ENCODE measurements at regions of chr16 and their contacts with region 1.

Region 1: DNA sequence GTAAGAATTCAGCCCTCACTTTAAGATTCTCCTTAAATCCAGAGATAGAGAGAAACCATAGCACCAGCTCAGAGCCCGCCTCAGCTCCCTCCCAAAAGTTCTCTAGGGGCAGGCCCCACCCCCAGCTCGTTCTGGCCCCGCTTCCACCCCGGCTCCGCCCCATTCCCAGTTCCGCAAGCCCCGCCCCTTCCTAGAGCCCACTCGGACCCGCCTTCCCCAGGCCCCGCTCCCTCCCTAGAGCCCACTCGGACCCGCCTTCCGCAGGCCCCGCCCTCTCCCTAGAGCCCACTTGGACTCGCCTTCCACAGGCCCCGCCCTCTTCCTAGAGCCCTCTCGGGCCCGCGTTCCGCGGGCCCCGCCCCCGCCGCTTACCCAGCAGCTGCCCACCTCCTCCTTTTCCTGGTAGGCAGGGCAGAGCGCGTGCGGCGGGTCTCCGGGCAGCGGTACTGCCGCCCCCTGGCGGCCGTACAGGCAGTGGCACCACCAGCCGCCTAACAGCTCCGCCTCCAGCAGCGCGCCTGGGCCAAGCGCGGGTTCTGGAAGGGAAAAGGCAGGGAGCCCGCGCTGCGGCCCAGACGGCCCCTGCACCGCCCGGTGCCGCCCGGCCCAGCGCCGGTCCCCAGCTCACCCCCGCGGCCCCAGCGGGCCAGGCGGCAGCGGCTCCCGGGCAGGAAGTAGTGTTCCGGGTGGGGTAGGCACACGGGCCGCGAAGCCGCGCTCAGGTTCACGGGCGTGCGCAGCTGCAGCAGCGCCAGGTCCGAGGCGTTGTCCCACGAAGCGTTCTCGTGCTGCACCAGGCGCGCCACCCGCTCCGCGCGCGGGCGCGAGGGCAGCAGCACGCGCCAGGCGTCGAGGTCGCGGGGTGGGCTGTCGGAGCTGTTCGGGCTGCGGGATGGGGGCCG is 6.8 kb upstream of the PRSS8 start:
- DNase-seq: peak; percentile 89
- ATAC-seq: peak; percentile 95
- H3K4me3 ChIP-seq: peak overlapping the region; percentile 63; the same call in 1 of the 2 replicates
- H3K27ac ChIP-seq: peak overlapping the region; percentile 55
- H3K4me1 ChIP-seq: peaks cover 9% of the 10 kb centered on the region
- H3K27me3 ChIP-seq: no peaks in the 10 kb centered on the region
- CTCF ChIP-seq: peak; percentile 87 to 97 (median 95)
- EP300 ChIP-seq: no peak
- POLR2A ChIP-seq: peak; percentile 36; the same call in 1 of the 2 replicates
- RAD21 ChIP-seq: peak; percentile 63

Region 2: DNA sequence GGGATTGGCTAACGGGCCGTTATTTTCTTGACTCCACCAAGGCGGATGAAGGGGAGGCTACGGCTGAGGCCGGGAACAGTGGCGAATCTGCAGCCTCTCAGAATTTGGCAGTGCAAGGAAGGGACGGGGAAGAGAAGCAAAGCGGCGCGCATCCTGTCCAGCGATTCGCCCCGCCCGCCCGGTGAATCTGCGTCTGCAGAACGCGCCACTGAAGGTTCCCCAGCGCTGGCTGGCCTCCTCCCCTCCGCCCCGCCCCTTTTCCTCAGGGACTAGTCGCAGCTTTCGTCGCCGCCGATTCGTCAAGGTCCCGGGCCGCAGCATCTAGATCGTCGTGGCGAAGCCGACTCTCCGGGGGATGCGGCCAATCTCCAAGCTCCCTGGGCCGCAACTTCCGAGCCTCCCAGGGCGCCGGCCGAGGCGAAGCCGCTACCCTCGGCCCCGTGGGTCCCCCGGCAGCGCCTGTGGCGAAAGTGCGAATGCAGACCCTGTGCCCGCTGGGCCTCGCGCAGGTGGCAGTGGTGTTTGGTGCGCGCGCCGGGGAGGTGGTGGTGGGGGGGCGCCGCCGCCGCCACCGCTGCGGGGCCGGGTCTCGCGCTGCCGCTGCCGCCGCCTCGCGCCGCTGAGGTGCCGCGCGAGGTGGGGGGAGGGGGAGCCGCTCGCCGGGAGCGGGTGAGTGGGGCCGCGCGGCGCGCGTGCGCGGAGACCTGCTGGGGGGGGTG is 184.7 kb before region 1 on chr16 and contains the start of gene SETD1A:
- CTCF ChIA-PET with region 1: interaction called, 23 read pairs
- POLR2A ChIA-PET with region 1: interaction called, 3 read pairs
- RAD21 ChIA-PET with region 1: interaction called, 17 read pairs
- SMC1A ChIA-PET with region 1: interaction called, 12 read pairs
- in situ Hi-C with region 1: no loop called
- intact Hi-C with region 1: loop called (anchors 2 kb)
- DNase-seq: peak; percentile 57
- ATAC-seq: peak; percentile 92
- H3K4me3 ChIP-seq: peak within 1 kb of the TSS; percentile 92
- H3K27ac ChIP-seq: peak within 1 kb of the TSS; percentile 100
- H3K4me1 ChIP-seq: peaks cover 13% of the 10 kb centered on the region
- H3K27me3 ChIP-seq: no peaks in the 10 kb centered on the region
- CTCF ChIP-seq: no peak
- EP300 ChIP-seq: peak in 1 of 2 experiments; percentile 99; a peak in 2 of 4 replicates
- POLR2A ChIP-seq: peak; percentile 75
- RAD21 ChIP-seq: no peak
- polyA plus RNA-seq, gene SETD1A: 0.02 to 0.18 TPM

Region 3: GRCh38 chr16:30997000-30997886 is 145.1 kb before region 1 on chr16:
- CTCF ChIA-PET with region 1: interaction called, 3 read pairs
- POLR2A ChIA-PET with region 1: interaction called, 7 read pairs
- RAD21 ChIA-PET with region 1: interaction called, 5 read pairs
- SMC1A ChIA-PET with region 1: interaction called, 3 read pairs
- in situ Hi-C with region 1: no loop called
- intact Hi-C with region 1: loop called (anchors 5 kb)
- DNase-seq: peak; percentile 51
- ATAC-seq: peak; percentile 90
- H3K4me3 ChIP-seq: peak overlapping the region; percentile 97
- H3K27ac ChIP-seq: peak overlapping the region; percentile 82
- H3K4me1 ChIP-seq: peaks cover 17% of the 10 kb centered on the region
- H3K27me3 ChIP-seq: no peaks in the 10 kb centered on the region; a peak in 1 of 4 replicates
- CTCF ChIP-seq: no peak
- EP300 ChIP-seq: no peak
- POLR2A ChIP-seq: peak; percentile 85
- RAD21 ChIP-seq: no peak

Region 4: GRCh38 chr16:31094424-31095120 is 47.8 kb before region 1 on chr16 and contains the start of gene VKORC1:
- CTCF ChIA-PET with region 1: interaction called, 13 read pairs
- POLR2A ChIA-PET with region 1: no interaction called
- RAD21 ChIA-PET with region 1: interaction called, 8 read pairs
- SMC1A ChIA-PET with region 1: interaction called, 3 read pairs
- in situ Hi-C with region 1: no loop called
- intact Hi-C with region 1: loop called (anchors 1 kb)
- DNase-seq: peak; percentile 87
- ATAC-seq: peak; percentile 89
- H3K4me3 ChIP-seq: peak within 1 kb of the TSS; percentile 99
- H3K27ac ChIP-seq: peak within 1 kb of the TSS; percentile 81
- H3K4me1 ChIP-seq: peaks cover 8% of the 10 kb centered on the region
- H3K27me3 ChIP-seq: no peaks in the 10 kb centered on the region
- CTCF ChIP-seq: no peak
- EP300 ChIP-seq: no peak
- POLR2A ChIP-seq: peak; percentile 79
- RAD21 ChIP-seq: no peak
- polyA plus RNA-seq, gene VKORC1: 19.8 to 39.0 TPM

Region 5: DNA sequence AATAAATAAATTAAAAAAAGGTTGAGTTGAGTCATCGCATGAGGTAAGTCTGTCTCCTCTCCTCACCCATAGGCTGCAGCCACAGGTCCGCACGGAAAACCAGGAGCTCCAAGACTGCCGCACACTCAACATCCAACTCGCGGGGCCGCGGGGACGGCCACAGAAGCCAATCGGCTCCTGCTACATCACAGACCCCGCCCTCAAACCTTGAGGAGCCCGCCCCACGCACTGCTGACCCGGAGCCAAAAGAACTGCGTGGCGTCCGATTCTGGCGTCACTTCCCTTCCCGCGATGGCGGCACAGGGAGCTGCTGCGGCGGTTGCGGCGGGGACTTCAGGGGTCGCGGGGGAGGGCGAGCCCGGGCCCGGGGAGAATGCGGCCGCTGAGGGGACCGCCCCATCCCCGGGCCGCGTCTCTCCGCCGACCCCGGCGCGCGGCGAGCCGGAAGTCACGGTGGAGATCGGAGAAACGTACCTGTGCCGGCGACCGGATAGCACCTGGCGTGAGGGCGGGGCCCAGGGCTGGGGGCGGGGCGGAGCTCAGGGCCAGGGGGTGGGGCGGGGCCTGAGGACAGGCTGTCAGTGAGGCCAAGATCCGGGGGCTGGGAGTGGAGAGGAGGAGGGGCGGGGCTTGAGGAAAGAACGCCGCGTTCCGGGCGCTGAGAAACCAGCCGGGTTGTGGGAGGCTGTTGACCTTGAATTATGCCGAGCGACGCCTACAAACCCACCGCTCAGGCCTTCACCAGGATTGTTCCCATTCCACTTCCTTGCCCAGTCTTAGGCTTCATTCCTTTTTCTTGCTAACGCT is 24.8 kb before region 1 on chr16 and contains the start of gene KAT8:
- CTCF ChIA-PET with region 1: interaction called, 15 read pairs
- POLR2A ChIA-PET with region 1: interaction called, 24 read pairs
- RAD21 ChIA-PET with region 1: interaction called, 48 read pairs
- SMC1A ChIA-PET with region 1: interaction called, 9 read pairs
- in situ Hi-C with region 1: no loop called
- intact Hi-C with region 1: no loop called
- DNase-seq: peak; percentile 72
- ATAC-seq: peak; percentile 96
- H3K4me3 ChIP-seq: peak within 1 kb of the TSS; percentile 84
- H3K27ac ChIP-seq: peak within 1 kb of the TSS; percentile 73
- H3K4me1 ChIP-seq: peaks cover 8% of the 10 kb centered on the region
- H3K27me3 ChIP-seq: no peaks in the 10 kb centered on the region
- CTCF ChIP-seq: no peak
- EP300 ChIP-seq: no peak
- POLR2A ChIP-seq: peak; percentile 96
- RAD21 ChIP-seq: no peak
- polyA plus RNA-seq, gene KAT8: 5.5 to 11.2 TPM

Region 6: GRCh38 chr16:31179747-31180459 is 37.5 kb after region 1 on chr16 and contains the start of gene FUS:
- CTCF ChIA-PET with region 1: interaction called, 13 read pairs
- POLR2A ChIA-PET with region 1: interaction called, 16 read pairs
- RAD21 ChIA-PET with region 1: interaction called, 20 read pairs
- SMC1A ChIA-PET with region 1: interaction called, 4 read pairs
- in situ Hi-C with region 1: no loop called
- intact Hi-C with region 1: no loop called
- DNase-seq: peak; percentile 50
- ATAC-seq: peak; percentile 78
- H3K4me3 ChIP-seq: peak within 1 kb of the TSS; percentile 87
- H3K27ac ChIP-seq: peak within 1 kb of the TSS; percentile 98
- H3K4me1 ChIP-seq: peaks cover 22% of the 10 kb centered on the region
- H3K27me3 ChIP-seq: no peaks in the 10 kb centered on the region
- CTCF ChIP-seq: no peak
- EP300 ChIP-seq: no peak
- POLR2A ChIP-seq: peak; percentile 91
- RAD21 ChIP-seq: no peak
- polyA plus RNA-seq, gene FUS: 46.8 to 131 TPM

Region 7: GRCh38 chr16:31382485-31383161 is 240.3 kb after region 1 on chr16:
- CTCF ChIA-PET with region 1: interaction called, 12 read pairs
- POLR2A ChIA-PET with region 1: interaction called, 3 read pairs
- RAD21 ChIA-PET with region 1: interaction called, 4 read pairs
- SMC1A ChIA-PET with region 1: interaction called, 7 read pairs
- in situ Hi-C with region 1: no loop called
- intact Hi-C with region 1: no loop called
- DNase-seq: no peak
- ATAC-seq: peak; percentile 89
- H3K4me3 ChIP-seq: no peak overlapping the region
- H3K27ac ChIP-seq: no peak overlapping the region
- H3K4me1 ChIP-seq: no peaks in the 10 kb centered on the region
- H3K27me3 ChIP-seq: peaks cover 0 to 3% of the 10 kb centered on the region in 2 experiments; a peak in 1 of 4 replicates
- CTCF ChIP-seq: peak; percentile 78 to 92 (median 87)
- EP300 ChIP-seq: no peak
- POLR2A ChIP-seq: no peak
- RAD21 ChIP-seq: peak; percentile 82

Measured in GM12878 (cell line).